ENCODE measurements at regions of chr12 and their contacts with region 1.

Region 1: DNA sequence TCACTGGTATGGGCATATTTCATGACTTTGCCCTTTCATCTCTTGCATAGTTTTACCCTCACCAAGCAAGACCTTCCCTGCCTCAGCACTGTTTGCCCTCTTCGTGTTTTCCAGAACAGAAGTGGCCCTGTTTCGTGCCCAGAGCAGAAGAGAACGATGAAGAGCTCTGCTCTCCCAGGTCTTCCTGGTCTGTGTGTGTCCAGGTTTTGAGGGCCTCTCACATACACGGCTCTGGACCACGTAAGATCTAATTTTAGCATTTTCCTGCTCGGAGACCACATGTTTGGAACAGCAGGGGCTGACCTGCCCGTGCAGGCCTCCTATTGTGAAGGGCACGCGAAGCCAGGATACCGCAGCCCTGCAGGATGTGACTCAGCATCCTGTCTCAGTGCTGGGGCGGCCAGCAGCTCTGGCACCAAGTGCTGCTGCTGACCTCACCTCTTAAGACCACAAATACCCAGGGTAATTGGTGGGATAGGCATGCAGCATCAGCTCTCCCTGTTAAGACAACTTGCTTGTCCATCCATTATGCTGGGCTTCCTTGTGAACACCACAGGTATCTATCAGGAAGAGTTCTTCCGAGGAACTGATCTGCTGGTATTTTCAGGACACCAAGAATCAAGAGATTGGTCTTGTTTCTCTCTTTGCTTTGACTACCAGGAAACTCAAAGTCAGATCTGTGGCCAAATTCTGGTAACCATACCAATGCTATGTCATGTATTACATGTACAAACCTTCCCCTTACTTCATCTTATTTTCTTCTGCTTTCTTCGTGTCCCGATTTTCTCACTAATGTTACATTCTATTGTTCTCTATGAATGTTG is 19.0 kb downstream of the SSH1 start:
- DNase-seq: peak; percentile 90
- H3K4me3 Mint-ChIP-seq: peak overlapping the region; percentile 35
- H3K27ac Mint-ChIP-seq: peak overlapping the region; percentile 81
- H3K4me1 Mint-ChIP-seq: peaks cover 70% of the 10 kb centered on the region
- H3K27me3 Mint-ChIP-seq: no peaks in the 10 kb centered on the region

Region 2: GRCh38 chr12:108826101-108826806 is 12.2 kb before region 1 on chr12:
- CTCF ChIA-PET with region 1: interaction called, 4 read pairs
- POLR2A ChIA-PET with region 1: interaction called, 45 read pairs
- DNase-seq: no peak
- H3K4me3 Mint-ChIP-seq: no peak overlapping the region
- H3K27ac Mint-ChIP-seq: peak overlapping the region; percentile 67
- H3K4me1 Mint-ChIP-seq: peaks cover 87% of the 10 kb centered on the region
- H3K27me3 Mint-ChIP-seq: no peaks in the 10 kb centered on the region

Region 3: DNA sequence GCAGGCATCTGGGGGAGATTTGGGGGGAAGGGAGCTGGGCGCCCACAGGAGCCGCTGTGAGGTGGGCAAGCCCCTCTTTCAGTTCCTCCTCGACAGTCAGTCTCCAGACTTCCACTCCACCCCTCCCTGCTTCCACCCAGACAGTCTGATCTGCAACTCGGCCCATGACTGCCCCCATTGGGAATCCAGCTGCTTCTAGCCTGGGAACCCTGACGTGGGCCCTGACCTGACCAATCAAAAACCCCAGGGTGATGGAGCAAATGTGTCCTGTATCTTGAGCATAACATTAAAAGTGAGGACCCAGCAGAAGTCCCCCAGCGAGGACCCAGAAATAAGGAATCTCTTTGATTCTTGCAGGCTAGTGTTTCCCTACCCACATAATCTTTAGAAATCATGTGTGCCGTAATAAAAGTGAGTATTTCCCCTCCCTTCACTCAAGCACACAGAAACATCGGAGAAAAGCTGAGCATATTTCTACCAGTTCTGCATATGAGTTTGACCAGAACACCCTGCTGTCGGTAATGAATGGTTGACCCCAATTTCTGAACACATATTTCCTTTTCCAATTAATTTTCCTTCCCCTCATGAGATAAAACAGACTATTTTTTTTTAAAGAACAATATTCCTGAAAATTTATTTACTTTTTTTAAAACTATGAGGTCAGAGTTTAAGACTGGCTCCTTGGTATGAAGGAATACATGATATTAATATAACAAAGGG is 12.6 kb after region 1 on chr12:
- CTCF ChIA-PET with region 1: no interaction called
- POLR2A ChIA-PET with region 1: interaction called, 62 read pairs
- DNase-seq: no peak
- H3K4me3 Mint-ChIP-seq: no peak overlapping the region
- H3K27ac Mint-ChIP-seq: no peak overlapping the region
- H3K4me1 Mint-ChIP-seq: peaks cover 36% of the 10 kb centered on the region
- H3K27me3 Mint-ChIP-seq: no peaks in the 10 kb centered on the region

Region 4: GRCh38 chr12:108896366-108897216 is 58.2 kb after region 1 on chr12:
- CTCF ChIA-PET with region 1: no interaction called
- POLR2A ChIA-PET with region 1: no interaction called
- DNase-seq: no peak
- H3K4me3 Mint-ChIP-seq: no peak overlapping the region
- H3K27ac Mint-ChIP-seq: no peak overlapping the region
- H3K4me1 Mint-ChIP-seq: no peaks in the 10 kb centered on the region
- H3K27me3 Mint-ChIP-seq: peaks cover 13% of the 10 kb centered on the region